HCT116 (cell line): ENCODE measurements at regions of chr18 and their contacts with region 1.

Region 1: DNA sequence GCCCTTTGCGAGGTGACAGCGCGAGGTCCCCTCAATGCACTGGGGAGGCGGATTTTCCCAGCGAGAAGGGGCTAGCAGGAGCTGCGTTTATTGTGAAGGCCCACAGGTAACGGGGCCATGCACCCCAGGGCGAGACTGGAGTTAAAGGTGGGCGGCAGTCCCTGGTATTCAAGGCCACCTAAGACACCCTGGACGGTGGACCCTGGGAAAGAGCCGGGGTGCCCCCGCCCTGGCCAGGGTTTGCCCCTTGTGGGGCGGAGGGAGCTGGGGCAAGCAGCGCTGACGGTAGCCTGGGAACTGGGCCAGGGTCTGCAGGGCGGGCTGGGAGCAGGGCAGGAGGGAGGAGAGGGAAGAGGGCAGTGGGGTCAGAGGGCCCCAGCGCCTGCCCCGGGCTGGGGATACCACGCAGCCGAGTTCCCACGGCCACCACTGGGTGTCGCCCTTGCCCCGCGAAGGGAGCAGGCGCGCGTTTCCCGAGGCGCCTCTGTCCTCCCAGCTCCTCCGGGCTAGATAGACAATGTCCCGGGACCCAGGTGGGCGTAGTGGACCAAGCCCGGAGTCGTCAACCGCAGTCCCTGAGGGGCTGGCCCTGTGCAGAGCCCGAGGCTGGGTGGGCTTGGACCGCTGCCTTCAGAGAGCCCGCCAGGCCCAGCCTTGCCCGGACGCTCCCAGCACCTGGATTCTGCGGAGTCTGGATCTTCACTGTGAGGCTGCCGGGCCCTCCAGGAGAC is 80.2 kb downstream of the SMAD4 start:
- DNase-seq: no peak
- ATAC-seq: peak; percentile 97
- H3K4me3 ChIP-seq: no peak overlapping the region
- H3K27ac ChIP-seq: no peak overlapping the region
- H3K4me1 ChIP-seq: peaks cover 0 to 12% of the 10 kb centered on the region in 2 experiments; a peak in 2 of 4 replicates
- H3K27me3 ChIP-seq: no peaks in the 10 kb centered on the region
- CTCF ChIP-seq: peak; percentile 47 to 89 (median 79); a peak in 5 of 6 replicates
- POLR2A ChIP-seq: no peak
- RAD21 ChIP-seq: peak; percentile 93

Region 2: DNA sequence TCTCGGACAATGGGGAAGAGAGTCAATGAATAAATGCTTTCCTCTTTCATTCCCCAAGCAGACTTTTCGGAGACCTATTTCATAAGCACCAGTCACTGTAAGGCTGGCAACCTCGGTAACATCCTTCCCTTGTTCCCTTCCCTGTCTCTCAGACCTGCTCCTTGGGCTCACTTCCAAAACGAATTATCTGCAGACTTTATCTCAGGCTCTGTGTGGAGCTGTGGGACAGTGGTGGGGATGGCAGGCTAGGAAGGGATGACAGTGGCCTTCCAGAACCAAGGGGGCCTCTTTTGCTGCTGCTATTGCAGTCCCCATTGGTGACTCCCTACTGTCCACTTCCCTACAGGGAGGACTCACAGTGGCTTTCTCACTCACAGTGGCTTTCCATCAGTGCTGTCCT is 272.9 kb after region 1 on chr18:
- CTCF ChIA-PET with region 1: no interaction called
- POLR2A ChIA-PET with region 1: no interaction called
- RAD21 ChIA-PET with region 1: interaction called in 1 of 2 experiments, 3 read pairs
- intact Hi-C with region 1: loop called (anchors 5 kb)
- DNase-seq: no peak
- ATAC-seq: no peak
- H3K4me3 ChIP-seq: no peak overlapping the region
- H3K27ac ChIP-seq: no peak overlapping the region
- H3K4me1 ChIP-seq: no peaks in the 10 kb centered on the region
- H3K27me3 ChIP-seq: no peaks in the 10 kb centered on the region
- CTCF ChIP-seq: no peak
- POLR2A ChIP-seq: no peak
- RAD21 ChIP-seq: no peak

Region 3: DNA sequence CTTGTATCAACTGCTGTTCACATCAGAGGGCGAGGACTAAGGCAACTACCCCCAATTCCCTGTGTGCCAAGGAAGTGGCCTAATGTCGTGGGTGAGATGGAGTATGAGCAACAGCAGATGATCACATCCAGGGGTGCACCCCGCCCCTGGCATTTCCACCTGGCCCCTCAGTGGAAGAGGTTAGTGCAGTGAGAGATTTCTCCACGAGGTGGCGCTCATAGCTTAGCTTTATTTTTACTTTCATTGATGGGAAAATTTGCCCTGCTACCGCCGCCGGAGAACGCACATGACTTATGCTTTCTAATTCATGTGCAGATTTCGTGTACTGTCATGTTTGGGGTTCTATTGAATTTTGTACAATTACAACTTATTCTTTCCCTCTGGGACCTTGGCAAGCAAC is 557.9 kb after region 1 on chr18:
- CTCF ChIA-PET with region 1: interaction called, 4 read pairs
- POLR2A ChIA-PET with region 1: no interaction called
- RAD21 ChIA-PET with region 1: no interaction called
- intact Hi-C with region 1: loop called (anchors 5 kb)
- DNase-seq: peak; percentile 8
- ATAC-seq: peak; percentile 54
- H3K4me3 ChIP-seq: no peak overlapping the region
- H3K27ac ChIP-seq: no peak overlapping the region
- H3K4me1 ChIP-seq: no peaks in the 10 kb centered on the region
- H3K27me3 ChIP-seq: no peaks in the 10 kb centered on the region
- CTCF ChIP-seq: peak; percentile 7 to 72 (median 58); a peak in 4 of 6 replicates
- POLR2A ChIP-seq: no peak
- RAD21 ChIP-seq: peak; percentile 54

Region 4: DNA sequence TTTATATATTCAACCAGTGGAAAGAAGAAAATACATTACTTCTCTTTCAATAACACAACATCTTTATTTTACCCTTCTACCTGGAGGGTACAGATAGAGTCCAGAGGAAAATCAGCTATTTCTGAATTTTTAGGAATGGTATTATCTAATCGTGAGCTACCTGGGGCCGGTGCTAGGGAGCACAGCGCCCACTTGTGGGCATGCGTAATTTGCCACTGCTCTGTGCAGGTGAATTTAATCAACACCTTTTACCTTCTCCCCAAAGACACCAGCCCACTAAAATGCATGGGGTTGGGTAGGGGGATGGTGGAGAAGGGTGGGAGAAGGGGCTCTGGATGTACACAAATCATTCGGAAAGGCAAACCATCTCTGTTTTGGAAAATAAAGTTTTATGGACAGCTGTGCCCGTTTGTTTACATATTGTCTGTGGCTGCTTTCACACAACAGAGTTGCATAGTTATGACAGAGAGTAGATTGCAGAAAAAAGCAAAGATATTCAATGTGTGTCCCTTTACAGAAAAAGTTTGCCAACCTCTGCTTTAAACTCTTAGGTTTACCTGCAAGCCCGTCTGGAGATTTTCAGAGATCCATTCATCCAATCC is 1178.3 kb after region 1 on chr18:
- CTCF ChIA-PET with region 1: interaction called, 4 read pairs
- POLR2A ChIA-PET with region 1: no interaction called
- RAD21 ChIA-PET with region 1: no interaction called
- intact Hi-C with region 1: loop called (anchors 5 kb)
- DNase-seq: no peak
- ATAC-seq: no peak
- H3K4me3 ChIP-seq: no peak overlapping the region
- H3K27ac ChIP-seq: no peak overlapping the region
- H3K4me1 ChIP-seq: no peaks in the 10 kb centered on the region
- H3K27me3 ChIP-seq: no peaks in the 10 kb centered on the region
- CTCF ChIP-seq: peak in 2 of 3 experiments; percentile 41 to 55; a peak in 3 of 6 replicates
- POLR2A ChIP-seq: no peak
- RAD21 ChIP-seq: peak; percentile 40